B cell (primary cell): ENCODE measurements at regions of chrX and their contacts with region 1.

Region 1: DNA sequence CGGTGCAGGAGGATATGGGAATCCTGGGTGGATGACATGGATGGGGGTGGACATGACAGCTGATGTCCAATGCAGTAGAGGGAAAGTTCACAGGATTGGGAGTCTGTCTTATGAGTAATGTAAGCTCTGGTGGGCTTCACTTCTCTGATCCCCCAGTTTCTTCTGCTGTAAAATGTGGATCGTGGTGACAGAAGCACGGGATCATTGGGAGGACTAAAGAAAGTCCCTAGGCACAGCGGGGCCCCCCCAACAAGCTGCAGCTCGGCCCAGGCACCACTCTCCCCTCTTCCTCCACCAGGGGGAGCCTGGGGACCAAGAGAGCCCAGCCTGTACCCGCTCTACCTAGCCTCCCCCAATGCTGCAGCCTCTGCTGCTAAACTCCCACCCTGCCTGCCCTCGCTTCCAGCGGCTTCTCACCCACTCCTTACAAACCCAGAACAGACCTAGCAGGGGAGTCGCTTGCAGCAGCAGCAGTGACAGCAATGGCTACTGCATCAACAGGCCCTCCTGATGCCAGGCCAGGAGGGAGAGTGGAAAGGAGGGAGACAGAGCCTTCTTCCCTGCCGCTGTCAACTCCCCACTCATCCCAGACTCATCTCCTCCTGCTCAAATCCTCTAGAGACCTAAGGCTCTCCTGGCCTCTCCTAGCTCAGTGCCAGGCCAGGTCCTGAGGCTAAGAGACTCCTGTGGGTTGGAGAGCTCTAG is 36.1 kb upstream of the IQSEC2 start:
- DNase-seq: peak; percentile 73
- ATAC-seq: peak; percentile 84
- H3K4me3 ChIP-seq: no peak overlapping the region
- H3K4me3 Mint-ChIP-seq: no peak overlapping the region
- H3K27ac ChIP-seq: no peak overlapping the region
- H3K27ac Mint-ChIP-seq: no peak overlapping the region
- H3K4me1 ChIP-seq: peaks cover 27 to 46% of the 10 kb centered on the region in 2 donors
- H3K4me1 Mint-ChIP-seq: peaks cover 24% of the 10 kb centered on the region
- H3K27me3 ChIP-seq: peaks cover 0 to 42% (median 27%) of the 10 kb centered on the region in 4 experiments
- H3K27me3 Mint-ChIP-seq: peaks cover 27% of the 10 kb centered on the region
- CTCF ChIP-seq: peak; percentile 76

Region 2: GRCh38 chrX:53071604-53072417 is 245.7 kb before region 1 on chrX:
- CTCF ChIA-PET with region 1: interaction called, 3 read pairs
- POLR2A ChIA-PET with region 1: no interaction called
- intact Hi-C with region 1: loop called (anchors 10 kb)
- DNase-seq: peak; percentile 86
- ATAC-seq: peak; percentile 85
- H3K4me3 ChIP-seq: peak overlapping the region in 4 of 5 experiments; percentile 52 to 60 (median 56)
- H3K4me3 Mint-ChIP-seq: peak overlapping the region; percentile 89
- H3K27ac ChIP-seq: peak overlapping the region; percentile 74 to 84
- H3K27ac Mint-ChIP-seq: peak overlapping the region; percentile 96
- H3K4me1 ChIP-seq: peaks cover 9 to 12% of the 10 kb centered on the region in 2 donors
- H3K4me1 Mint-ChIP-seq: peaks cover 13% of the 10 kb centered on the region
- H3K27me3 ChIP-seq: no peaks in the 10 kb centered on the region
- H3K27me3 Mint-ChIP-seq: no peaks in the 10 kb centered on the region
- CTCF ChIP-seq: peak; percentile 69

Region 3: DNA sequence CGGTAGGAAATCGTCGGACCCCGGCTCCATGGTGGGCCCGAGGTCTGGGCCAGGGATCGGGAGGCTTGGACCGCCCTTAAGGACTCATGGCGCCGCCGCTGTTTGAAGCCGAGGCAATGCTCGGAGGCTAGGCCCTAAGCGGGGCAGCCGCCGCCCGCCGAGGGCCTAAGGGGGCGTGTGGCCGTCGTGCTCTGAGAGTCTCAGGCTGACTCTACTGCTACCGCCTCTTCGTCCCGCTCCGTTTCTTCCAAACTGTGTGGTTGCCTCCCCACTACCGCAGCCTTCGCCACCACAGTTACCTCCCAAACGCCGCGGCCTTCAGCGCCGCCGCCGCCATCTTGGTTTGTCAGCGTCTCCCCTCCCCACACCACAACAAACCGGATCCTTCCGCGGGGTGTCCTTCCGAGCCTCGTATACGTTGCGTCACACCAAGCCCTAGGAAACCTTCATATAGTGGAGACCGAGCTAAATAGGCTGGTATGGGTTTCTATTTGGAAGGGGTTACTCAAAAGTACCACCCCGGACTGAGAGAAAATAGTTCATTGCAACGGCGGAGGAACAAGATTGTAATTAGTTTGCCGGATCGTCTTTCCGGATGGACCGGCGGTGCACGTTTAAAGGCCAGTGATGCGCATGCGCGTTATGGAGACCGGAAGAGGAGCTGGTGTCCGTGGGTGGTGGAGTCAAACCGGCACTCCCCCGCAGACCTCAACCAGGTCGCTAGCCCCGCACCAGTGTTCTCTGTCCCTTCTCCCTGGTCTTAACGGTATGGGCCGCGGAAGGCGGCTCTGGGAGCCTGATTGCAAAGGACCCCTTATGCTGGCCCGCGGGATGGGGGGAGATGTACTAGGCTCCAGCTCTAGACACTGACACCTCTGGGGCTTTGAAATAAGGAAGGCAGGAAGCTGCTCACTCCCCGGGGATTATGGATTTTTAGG is 92.4 kb before region 1 on chrX and contains the start of gene KDM5C:
- CTCF ChIA-PET with region 1: no interaction called
- POLR2A ChIA-PET with region 1: no interaction called
- intact Hi-C with region 1: no loop called
- DNase-seq: peak; percentile 93
- ATAC-seq: peak; percentile 88
- H3K4me3 ChIP-seq: peak within 1 kb of the TSS; percentile 65 to 100 (median 96)
- H3K4me3 Mint-ChIP-seq: peak within 1 kb of the TSS; percentile 96
- H3K27ac ChIP-seq: peak within 1 kb of the TSS; percentile 86 to 97
- H3K27ac Mint-ChIP-seq: peak within 1 kb of the TSS; percentile 98
- H3K4me1 ChIP-seq: peaks cover 31 to 34% of the 10 kb centered on the region in 2 donors
- H3K4me1 Mint-ChIP-seq: peaks cover 32% of the 10 kb centered on the region
- H3K27me3 ChIP-seq: no peaks in the 10 kb centered on the region
- H3K27me3 Mint-ChIP-seq: no peaks in the 10 kb centered on the region
- CTCF ChIP-seq: no peak
- total RNA-seq, gene KDM5C: 138 and 157 TPM in 2 replicates

Region 4: DNA sequence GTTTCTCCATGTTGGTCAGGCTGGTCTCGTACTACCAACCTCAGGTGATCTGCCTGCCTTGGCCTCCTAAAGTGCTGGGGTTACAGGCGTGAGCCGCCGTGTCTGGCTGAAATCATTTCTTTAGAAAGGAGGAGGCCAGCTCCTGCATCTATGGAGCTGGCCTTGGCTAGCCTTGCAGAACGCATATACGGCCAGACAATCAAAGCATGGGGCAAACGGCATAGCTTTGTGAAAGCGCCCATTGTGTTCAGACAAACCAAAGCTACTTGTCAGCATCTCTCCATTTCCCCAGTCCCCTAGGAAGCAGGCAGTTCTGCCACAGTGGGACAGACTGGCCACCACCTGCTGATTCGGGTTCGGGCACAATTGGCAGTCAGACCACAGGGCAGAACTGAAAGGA is 12.8 kb after region 1 on chrX:
- CTCF ChIA-PET with region 1: interaction called, 11 read pairs
- POLR2A ChIA-PET with region 1: no interaction called
- intact Hi-C with region 1: no loop called
- DNase-seq: no peak
- ATAC-seq: no peak
- H3K4me3 ChIP-seq: no peak overlapping the region
- H3K4me3 Mint-ChIP-seq: no peak overlapping the region
- H3K27ac ChIP-seq: no peak overlapping the region
- H3K27ac Mint-ChIP-seq: no peak overlapping the region
- H3K4me1 ChIP-seq: no peaks in the 10 kb centered on the region
- H3K4me1 Mint-ChIP-seq: no peaks in the 10 kb centered on the region
- H3K27me3 ChIP-seq: peaks cover 0 to 10% (median 2%) of the 10 kb centered on the region in 4 experiments
- H3K27me3 Mint-ChIP-seq: peaks cover 34% of the 10 kb centered on the region
- CTCF ChIP-seq: no peak

Region 5: DNA sequence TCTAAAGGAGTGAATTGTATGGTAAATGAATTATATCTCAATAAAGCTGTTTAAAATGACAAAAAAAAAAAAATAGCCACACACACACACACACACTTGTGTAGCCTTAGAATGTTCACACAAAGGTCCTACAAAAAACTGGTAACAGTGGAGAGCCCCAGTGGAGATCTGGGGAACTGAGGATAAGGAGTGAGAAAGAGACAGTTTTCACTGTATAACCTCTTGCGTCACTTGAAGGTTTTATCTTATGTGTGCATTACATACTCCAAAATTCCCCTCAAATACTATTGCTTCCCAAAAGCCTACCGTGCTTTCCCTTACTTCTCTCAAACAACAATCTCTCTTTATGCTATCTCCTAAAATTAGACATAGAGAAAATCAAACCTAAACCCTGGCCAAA is 37.1 kb after region 1 on chrX:
- CTCF ChIA-PET with region 1: no interaction called
- POLR2A ChIA-PET with region 1: no interaction called
- intact Hi-C with region 1: no loop called
- DNase-seq: no peak
- ATAC-seq: no peak
- H3K4me3 ChIP-seq: no peak overlapping the region
- H3K4me3 Mint-ChIP-seq: no peak overlapping the region
- H3K27ac ChIP-seq: no peak overlapping the region
- H3K27ac Mint-ChIP-seq: no peak overlapping the region
- H3K4me1 ChIP-seq: no peaks in the 10 kb centered on the region
- H3K4me1 Mint-ChIP-seq: no peaks in the 10 kb centered on the region
- H3K27me3 ChIP-seq: no peaks in the 10 kb centered on the region
- H3K27me3 Mint-ChIP-seq: no peaks in the 10 kb centered on the region
- CTCF ChIP-seq: no peak

Region 6: DNA sequence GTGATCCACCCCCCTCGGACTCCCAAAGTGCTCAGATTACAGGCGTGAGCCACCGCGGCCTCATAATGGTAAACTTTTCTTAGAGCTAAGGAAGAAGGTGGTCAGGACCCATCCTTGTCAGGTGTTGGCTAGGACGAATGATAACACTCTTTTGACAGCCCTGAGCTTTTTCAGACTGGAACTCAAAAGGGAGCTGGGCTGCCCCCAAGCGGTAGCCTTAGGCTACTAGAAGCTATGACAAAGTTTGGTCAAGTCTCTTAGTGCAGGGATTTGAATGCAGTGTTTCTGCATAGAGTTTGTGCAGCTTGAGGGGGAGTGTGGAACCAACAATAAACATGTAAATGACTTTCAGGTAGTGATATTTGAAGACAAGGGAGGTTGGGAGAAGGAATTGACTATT is 128.5 kb after region 1 on chrX:
- CTCF ChIA-PET with region 1: interaction called, 35 read pairs
- POLR2A ChIA-PET with region 1: interaction called, 3 read pairs
- intact Hi-C with region 1: no loop called
- DNase-seq: peak; percentile 35
- ATAC-seq: no peak
- H3K4me3 ChIP-seq: no peak overlapping the region
- H3K4me3 Mint-ChIP-seq: no peak overlapping the region
- H3K27ac ChIP-seq: no peak overlapping the region
- H3K27ac Mint-ChIP-seq: no peak overlapping the region
- H3K4me1 ChIP-seq: peaks cover 5 to 11% of the 10 kb centered on the region in 2 donors
- H3K4me1 Mint-ChIP-seq: peaks cover 4% of the 10 kb centered on the region
- H3K27me3 ChIP-seq: peaks cover 0 to 2% (median 0%) of the 10 kb centered on the region in 4 experiments
- H3K27me3 Mint-ChIP-seq: no peaks in the 10 kb centered on the region
- CTCF ChIP-seq: peak; percentile 55

Region 7: GRCh38 chrX:55057675-55058249 is 1740.2 kb after region 1 on chrX:
- CTCF ChIA-PET with region 1: interaction called, 5 read pairs
- POLR2A ChIA-PET with region 1: no interaction called
- intact Hi-C with region 1: loop called (anchors 5 kb)
- DNase-seq: peak; percentile 53
- ATAC-seq: peak; percentile 71
- H3K4me3 ChIP-seq: peak overlapping the region in 3 of 5 experiments; percentile 18 to 24 (median 18)
- H3K4me3 Mint-ChIP-seq: peak overlapping the region; percentile 78
- H3K27ac ChIP-seq: no peak overlapping the region
- H3K27ac Mint-ChIP-seq: no peak overlapping the region
- H3K4me1 ChIP-seq: peaks cover 6 to 7% of the 10 kb centered on the region in 2 donors
- H3K4me1 Mint-ChIP-seq: peaks cover 10% of the 10 kb centered on the region
- H3K27me3 ChIP-seq: no peaks in the 10 kb centered on the region
- H3K27me3 Mint-ChIP-seq: no peaks in the 10 kb centered on the region
- CTCF ChIP-seq: peak; percentile 77